ENCODE measurements at regions of chr12 and their contacts with region 1.

Region 1: DNA sequence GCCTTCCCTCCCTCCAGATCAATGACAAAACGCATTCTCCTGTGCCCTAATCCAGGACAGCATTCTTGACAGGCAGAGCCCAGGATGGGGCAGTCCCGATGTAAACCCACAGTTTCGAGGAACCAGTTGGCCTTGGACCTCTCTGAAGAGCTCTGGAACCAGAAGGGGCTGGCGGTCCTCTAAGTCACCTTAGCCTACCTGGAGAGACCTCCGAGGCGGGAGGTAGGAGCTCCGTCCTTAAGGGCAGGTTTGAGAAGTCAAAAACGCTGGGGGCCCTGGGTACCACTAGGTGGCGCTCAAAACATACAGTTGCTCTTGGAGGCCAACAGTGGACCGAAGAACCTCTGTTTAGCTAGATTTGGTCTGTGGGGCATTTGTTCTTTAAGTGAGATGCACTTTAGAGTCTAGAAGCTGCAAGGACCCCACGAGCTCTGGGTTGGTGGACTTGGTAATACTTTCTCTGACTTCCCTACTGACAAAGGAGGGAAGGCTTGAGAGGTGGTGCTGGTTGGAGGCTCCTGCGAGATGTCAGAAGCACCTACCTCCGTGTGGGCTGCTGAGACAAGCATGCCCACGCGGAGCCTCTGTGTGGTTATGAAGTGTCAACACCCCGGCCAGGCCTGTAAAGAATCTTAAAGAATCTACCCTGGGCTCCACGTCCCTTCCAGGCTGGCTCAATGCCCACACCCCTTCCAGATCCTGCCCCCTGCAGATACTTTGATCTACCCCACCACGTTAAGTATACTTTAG is 74.8 kb upstream of the CHST11 start:
- DNase-seq: peak; percentile 90
- ATAC-seq: peak; percentile 90
- H3K4me3 ChIP-seq: no peak overlapping the region
- H3K4me3 Mint-ChIP-seq: no peak overlapping the region
- H3K27ac ChIP-seq: no peak overlapping the region
- H3K27ac Mint-ChIP-seq: peak overlapping the region; percentile 1
- H3K4me1 ChIP-seq: peaks cover 3 to 9% of the 10 kb centered on the region in 2 donors
- H3K4me1 Mint-ChIP-seq: peaks cover 9% of the 10 kb centered on the region
- H3K27me3 ChIP-seq: peaks cover 0 to 4% (median 2%) of the 10 kb centered on the region in 4 experiments
- H3K27me3 Mint-ChIP-seq: peaks cover 6% of the 10 kb centered on the region
- CTCF ChIP-seq: peak; percentile 95

Region 2: DNA sequence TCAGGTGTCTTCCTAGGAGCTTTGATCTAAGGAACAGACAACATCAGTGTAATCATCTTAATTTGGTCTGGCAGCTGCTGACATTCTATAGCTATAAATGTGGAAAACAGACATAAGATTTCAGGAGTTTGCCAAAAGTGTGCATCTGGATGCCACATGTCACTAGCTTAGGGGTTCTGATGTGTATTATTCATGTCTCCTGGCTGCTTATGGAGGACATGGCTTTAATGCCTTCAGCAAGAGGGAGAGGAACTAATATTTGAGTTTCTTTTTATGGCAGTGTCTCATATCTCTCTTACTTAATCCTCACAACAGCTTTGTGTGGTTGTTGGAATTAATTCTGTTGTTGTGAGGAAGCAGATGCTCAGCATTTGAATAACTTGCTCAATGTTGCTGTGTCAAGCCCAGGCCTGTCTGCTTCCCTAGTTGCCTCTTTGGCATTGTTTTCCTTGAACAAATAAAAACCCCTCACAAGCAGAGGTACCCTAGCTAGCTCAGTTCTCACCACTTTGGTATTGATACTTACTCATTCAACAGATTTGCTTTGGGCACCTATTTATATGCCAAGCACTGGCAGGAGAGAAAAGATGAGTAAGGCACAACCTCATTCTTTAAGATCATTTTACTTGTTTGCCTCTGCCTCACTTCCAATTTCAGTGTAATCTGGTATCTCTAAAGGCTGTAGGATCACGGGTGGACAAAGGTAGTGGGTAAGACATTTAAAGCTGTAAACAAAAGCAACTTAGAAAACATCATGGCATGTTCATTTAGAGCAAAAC is 118.1 kb before region 1 on chr12:
- CTCF ChIA-PET with region 1: no interaction called
- POLR2A ChIA-PET with region 1: no interaction called
- intact Hi-C with region 1: no loop called
- DNase-seq: no peak
- ATAC-seq: no peak
- H3K4me3 ChIP-seq: no peak overlapping the region
- H3K4me3 Mint-ChIP-seq: no peak overlapping the region
- H3K27ac ChIP-seq: no peak overlapping the region
- H3K27ac Mint-ChIP-seq: no peak overlapping the region
- H3K4me1 ChIP-seq: no peaks in the 10 kb centered on the region
- H3K4me1 Mint-ChIP-seq: no peaks in the 10 kb centered on the region
- H3K27me3 ChIP-seq: no peaks in the 10 kb centered on the region
- H3K27me3 Mint-ChIP-seq: no peaks in the 10 kb centered on the region
- CTCF ChIP-seq: no peak

Region 3: DNA sequence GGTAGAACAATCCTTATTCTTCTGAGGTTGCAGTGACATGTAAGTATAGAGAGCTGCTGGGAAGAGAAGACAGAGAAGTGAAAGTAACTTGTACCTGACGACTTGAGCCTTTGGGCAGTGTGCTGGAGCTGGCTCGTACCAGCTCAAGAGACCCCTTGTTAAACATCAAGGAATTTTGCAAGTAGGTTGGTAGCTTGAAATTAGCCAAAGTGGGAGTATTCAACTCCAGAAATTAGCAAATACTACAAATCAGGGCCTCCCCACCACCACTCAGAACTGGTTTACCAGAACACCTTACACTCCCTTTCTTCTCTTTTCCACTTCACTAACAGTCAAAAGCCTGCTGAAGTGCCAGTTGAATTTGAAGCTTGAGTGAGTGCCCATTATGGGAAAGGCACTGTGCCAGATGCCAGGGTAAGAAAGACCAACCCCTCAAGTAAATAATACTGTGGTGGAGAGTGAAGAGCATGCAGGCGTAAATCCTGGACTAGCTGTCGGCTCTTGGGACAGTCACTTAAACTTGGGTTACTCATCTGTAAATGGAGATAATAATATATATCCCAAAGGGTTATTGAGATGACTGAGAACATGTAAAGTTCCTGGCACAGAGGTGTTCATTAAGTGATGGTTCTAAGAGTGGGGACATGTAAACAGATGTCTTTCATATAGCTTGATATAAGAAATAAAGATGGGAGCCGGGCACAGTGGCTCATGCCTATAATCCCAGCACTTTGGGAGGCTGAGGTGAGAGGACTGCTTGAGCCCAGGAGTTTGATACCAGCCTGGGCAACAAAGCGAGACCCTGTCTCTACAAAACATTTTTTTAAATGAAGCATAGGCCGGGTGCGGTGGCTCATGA is 105.4 kb before region 1 on chr12:
- CTCF ChIA-PET with region 1: no interaction called
- POLR2A ChIA-PET with region 1: no interaction called
- intact Hi-C with region 1: no loop called
- DNase-seq: peak; percentile 54
- ATAC-seq: peak; percentile 69
- H3K4me3 ChIP-seq: peak overlapping the region; percentile 19 to 64 (median 48)
- H3K4me3 Mint-ChIP-seq: peak overlapping the region; percentile 91
- H3K27ac ChIP-seq: peak overlapping the region in 1 of 2 donors; percentile 62
- H3K27ac Mint-ChIP-seq: peak overlapping the region; percentile 87
- H3K4me1 ChIP-seq: peaks cover 11 to 13% of the 10 kb centered on the region in 2 donors
- H3K4me1 Mint-ChIP-seq: peaks cover 12% of the 10 kb centered on the region
- H3K27me3 ChIP-seq: no peaks in the 10 kb centered on the region
- H3K27me3 Mint-ChIP-seq: no peaks in the 10 kb centered on the region
- CTCF ChIP-seq: no peak

Region 4: DNA sequence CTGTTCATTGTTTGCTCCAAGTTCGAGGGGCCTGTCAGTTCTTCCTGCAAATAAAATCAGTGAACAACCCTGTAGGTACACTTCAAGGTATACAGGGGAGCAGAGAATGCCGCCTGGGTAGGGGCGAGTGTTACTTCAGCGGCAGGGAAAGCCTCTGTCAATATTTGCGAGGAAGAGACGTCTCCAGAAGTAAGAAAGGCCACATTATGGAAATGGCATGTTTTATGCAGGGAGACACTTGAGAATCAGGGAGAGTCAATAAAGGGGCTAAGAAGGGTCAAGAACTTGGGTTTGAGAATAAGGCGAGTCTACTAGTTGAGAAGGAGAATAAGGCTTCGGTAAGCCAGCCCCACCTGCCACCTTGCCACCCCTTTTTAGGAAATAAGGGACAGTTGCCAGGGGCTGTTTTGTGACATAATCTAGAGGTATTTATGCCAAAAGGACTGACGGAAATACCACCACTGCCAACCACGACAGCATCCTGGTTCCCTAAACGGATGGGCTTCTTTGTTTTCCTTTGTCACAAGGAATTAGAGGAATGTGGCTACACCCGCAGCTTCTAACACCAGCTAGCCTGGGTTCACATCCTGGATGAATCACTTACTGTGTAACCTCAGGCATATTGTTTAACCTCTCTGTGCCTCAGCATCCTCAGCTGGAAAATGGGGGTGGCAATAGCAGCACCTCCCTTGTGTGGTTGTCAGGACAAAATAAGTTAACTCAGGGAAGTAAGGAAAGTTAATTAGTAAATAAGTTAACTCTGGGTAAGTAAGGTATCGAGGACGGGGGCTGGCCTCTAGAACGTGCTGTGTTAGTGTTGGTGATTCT is 10.6 kb before region 1 on chr12:
- CTCF ChIA-PET with region 1: interaction called, 25 read pairs
- POLR2A ChIA-PET with region 1: no interaction called
- intact Hi-C with region 1: no loop called
- DNase-seq: no peak
- ATAC-seq: no peak
- H3K4me3 ChIP-seq: no peak overlapping the region
- H3K4me3 Mint-ChIP-seq: no peak overlapping the region
- H3K27ac ChIP-seq: no peak overlapping the region
- H3K27ac Mint-ChIP-seq: no peak overlapping the region
- H3K4me1 ChIP-seq: peaks cover 14 to 15% of the 10 kb centered on the region in 2 donors
- H3K4me1 Mint-ChIP-seq: peaks cover 13% of the 10 kb centered on the region
- H3K27me3 ChIP-seq: no peaks in the 10 kb centered on the region
- H3K27me3 Mint-ChIP-seq: no peaks in the 10 kb centered on the region
- CTCF ChIP-seq: no peak

Region 5: DNA sequence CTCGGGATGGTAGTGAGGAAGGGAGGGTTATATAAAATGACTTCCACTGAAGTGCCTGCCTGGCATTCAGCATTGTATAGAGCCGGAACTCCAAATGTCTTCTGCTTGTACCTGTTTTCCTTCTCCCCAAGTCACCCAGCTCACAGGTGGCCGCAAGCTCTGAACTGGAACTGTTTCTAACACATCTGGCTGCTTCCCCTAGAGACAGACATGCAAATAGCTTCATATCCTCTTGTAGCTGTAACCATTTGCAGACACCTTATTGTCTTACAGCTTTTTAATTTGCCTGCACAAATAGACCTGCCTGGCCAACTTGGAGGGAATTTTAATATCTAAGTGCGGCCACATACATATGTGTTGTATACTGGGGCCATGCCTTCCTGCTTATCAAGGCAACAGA is 200.8 kb after region 1 on chr12:
- CTCF ChIA-PET with region 1: interaction called, 14 read pairs
- POLR2A ChIA-PET with region 1: no interaction called
- intact Hi-C with region 1: no loop called
- DNase-seq: peak; percentile 90
- ATAC-seq: peak; percentile 91
- H3K4me3 ChIP-seq: peak overlapping the region in 3 of 5 experiments; percentile 4 to 30 (median 26)
- H3K4me3 Mint-ChIP-seq: peak overlapping the region; percentile 59
- H3K27ac ChIP-seq: peak overlapping the region; percentile 72 to 93
- H3K27ac Mint-ChIP-seq: peak overlapping the region; percentile 69
- H3K4me1 ChIP-seq: peaks cover 75 to 80% of the 10 kb centered on the region in 2 donors
- H3K4me1 Mint-ChIP-seq: peaks cover 88% of the 10 kb centered on the region
- H3K27me3 ChIP-seq: no peaks in the 10 kb centered on the region
- H3K27me3 Mint-ChIP-seq: no peaks in the 10 kb centered on the region
- CTCF ChIP-seq: no peak

Region 6: DNA sequence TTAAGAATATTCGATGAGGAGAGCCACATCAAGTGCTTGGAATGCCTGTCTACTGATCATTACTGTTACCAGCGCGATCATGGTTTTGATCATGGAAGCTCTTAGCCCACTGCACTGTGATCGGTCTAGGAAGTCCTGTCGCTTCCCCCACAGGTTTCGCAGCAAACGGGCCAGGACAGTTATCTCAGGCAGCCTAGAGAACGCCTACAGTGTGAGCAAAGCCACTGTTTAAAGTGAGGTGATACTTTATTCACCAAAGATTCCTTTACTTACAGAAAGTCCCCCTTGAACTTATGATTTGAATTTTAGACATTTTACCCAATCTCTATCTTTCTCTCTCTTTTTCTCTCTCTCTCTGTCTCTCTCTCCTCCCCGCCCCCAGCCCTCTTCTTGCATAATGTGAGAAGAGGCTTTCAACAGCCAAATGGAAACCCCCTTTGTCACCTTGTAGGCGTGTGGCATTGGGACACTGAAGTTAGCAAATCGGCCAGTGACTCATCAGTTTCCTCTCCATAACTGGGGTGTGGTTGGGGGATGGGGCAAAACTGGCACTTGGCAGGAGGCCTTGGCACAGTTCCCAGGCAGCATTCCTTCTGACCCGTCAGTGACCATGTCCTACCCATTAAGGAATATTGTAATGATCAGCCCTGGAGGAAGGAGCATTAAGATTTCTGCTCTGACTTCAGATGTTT is 289.6 kb after region 1 on chr12:
- CTCF ChIA-PET with region 1: interaction called, 18 read pairs
- POLR2A ChIA-PET with region 1: no interaction called
- intact Hi-C with region 1: no loop called
- DNase-seq: peak; percentile 75
- ATAC-seq: peak; percentile 73
- H3K4me3 ChIP-seq: no peak overlapping the region
- H3K4me3 Mint-ChIP-seq: peak overlapping the region; percentile 61
- H3K27ac ChIP-seq: peak overlapping the region in 1 of 2 donors; percentile 48
- H3K27ac Mint-ChIP-seq: peak overlapping the region; percentile 71
- H3K4me1 ChIP-seq: peaks cover 39 to 62% of the 10 kb centered on the region in 2 donors
- H3K4me1 Mint-ChIP-seq: peaks cover 79% of the 10 kb centered on the region
- H3K27me3 ChIP-seq: no peaks in the 10 kb centered on the region
- H3K27me3 Mint-ChIP-seq: no peaks in the 10 kb centered on the region
- CTCF ChIP-seq: no peak

Region 7: GRCh38 chr12:104763168-104763805 is 381.4 kb after region 1 on chr12:
- CTCF ChIA-PET with region 1: interaction called, 19 read pairs
- POLR2A ChIA-PET with region 1: no interaction called
- intact Hi-C with region 1: no loop called
- DNase-seq: no peak
- ATAC-seq: no peak
- H3K4me3 ChIP-seq: no peak overlapping the region
- H3K4me3 Mint-ChIP-seq: no peak overlapping the region
- H3K27ac ChIP-seq: no peak overlapping the region
- H3K27ac Mint-ChIP-seq: no peak overlapping the region
- H3K4me1 ChIP-seq: peaks cover 18% of the 10 kb centered on the region in 2 donors
- H3K4me1 Mint-ChIP-seq: peaks cover 26% of the 10 kb centered on the region
- H3K27me3 ChIP-seq: peaks cover 0 to 14% (median 10%) of the 10 kb centered on the region in 4 experiments
- H3K27me3 Mint-ChIP-seq: peaks cover 10% of the 10 kb centered on the region
- CTCF ChIP-seq: no peak

Region 8: DNA sequence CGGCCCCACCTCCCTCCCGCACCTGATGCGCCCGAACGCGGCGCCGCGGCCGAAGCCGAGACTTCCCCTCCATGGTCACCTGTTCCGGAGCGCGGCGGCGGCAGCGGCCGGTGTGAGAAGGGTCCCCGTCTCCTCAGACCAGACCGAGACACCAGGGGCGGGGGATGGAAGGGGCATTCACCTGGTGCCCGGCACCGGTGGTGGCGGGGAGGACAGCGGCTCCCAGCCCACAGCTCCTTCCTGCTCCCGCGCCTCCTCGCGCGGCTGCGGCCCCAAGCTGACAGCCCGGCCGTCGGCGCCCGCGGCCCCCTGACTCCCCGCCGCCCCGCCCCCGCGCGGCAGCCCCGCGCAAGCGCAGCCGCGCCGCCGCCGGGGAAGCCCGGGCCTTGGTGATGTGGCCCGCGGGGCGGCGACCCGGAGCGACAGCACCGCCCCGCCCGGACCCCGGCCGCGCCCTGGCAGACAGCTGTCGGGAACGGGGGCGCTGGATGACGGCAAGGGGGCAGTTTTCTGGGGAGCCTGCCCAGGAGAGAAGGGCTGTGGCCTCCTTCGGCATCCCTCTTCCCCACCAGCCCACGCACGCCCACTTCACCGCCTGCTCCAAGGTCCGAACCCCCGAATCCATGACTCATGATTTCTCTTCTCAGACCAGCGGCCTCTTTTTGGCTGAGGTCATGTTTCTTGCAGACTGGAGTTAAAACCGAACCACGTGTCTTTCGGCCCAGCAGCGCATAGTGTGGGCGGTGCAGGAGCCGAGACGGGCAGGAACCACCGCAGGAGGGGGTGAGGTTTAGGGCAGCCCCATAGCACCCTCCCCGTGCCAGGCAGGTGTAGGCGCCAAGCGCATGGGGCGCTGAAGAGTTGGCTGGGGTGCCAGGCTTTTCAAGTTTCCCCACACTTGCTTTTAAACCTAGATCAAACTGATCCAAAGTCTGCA is 576.4 kb after region 1 on chr12 and contains the start of gene SLC41A2:
- CTCF ChIA-PET with region 1: interaction called, 20 read pairs
- POLR2A ChIA-PET with region 1: no interaction called
- intact Hi-C with region 1: loop called (anchors 1 kb)
- DNase-seq: peak; percentile 91
- ATAC-seq: peak; percentile 84
- H3K4me3 ChIP-seq: peak within 1 kb of the TSS; percentile 57 to 80 (median 75)
- H3K4me3 Mint-ChIP-seq: peak within 1 kb of the TSS; percentile 95
- H3K27ac ChIP-seq: peak within 1 kb of the TSS; percentile 79 to 80
- H3K27ac Mint-ChIP-seq: peak within 1 kb of the TSS; percentile 93
- H3K4me1 ChIP-seq: peaks cover 13 to 16% of the 10 kb centered on the region in 2 donors
- H3K4me1 Mint-ChIP-seq: peaks cover 23% of the 10 kb centered on the region
- H3K27me3 ChIP-seq: peaks cover 0 to 2% (median 0%) of the 10 kb centered on the region in 4 experiments
- H3K27me3 Mint-ChIP-seq: peaks cover 6% of the 10 kb centered on the region
- CTCF ChIP-seq: peak; percentile 48
- total RNA-seq, gene SLC41A2: 13.0 TPM in 2 replicates

Measured in B cell (primary cell).